H1 (cell line): ENCODE measurements at regions of chr6 and their contacts with region 1.

Region 1: DNA sequence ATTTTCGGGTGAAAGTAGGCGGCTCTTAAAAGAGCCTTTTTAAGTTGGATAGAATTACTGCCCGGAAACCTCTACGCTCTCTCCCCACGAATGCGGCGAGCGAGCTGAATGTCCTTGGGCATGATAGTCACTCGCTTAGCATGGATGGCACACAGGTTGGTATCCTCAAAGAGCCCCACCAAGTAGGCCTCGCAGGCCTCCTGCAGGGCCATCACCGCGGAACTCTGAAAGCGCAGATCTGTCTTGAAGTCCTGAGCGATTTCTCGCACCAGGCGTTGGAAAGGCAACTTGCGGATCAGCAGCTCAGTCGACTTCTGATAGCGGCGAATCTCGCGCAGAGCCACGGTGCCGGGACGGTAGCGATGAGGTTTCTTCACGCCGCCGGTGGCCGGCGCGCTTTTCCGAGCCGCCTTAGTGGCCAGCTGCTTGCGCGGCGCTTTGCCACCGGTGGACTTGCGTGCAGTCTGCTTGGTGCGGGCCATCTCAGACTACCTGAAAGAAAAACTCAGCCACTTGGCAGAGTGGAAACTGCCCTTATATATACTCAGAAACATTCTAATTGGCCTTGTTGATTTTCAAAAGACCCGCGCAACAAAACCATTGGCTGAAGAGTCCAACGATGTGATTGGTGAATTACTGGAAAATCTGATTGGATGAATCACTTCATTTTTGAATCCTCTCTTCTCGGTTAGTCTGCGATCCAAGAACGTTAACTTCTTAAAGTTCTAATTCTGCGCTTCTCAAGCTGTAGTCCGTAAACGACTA is 93.9 kb upstream of the BTN3A2 start:
- DNase-seq: peak in 1 of 2 experiments; percentile 85
- H3K4me3 ChIP-seq: peak overlapping the region; percentile 73 to 97 (median 88)
- H3K27ac ChIP-seq: peak overlapping the region; percentile 93
- H3K4me1 ChIP-seq: peaks cover 0 to 10% (median 4%) of the 10 kb centered on the region in 4 experiments; a peak in 4 of 7 replicates
- H3K27me3 ChIP-seq: no peaks in the 10 kb centered on the region
- CTCF ChIP-seq: no peak
- EP300 ChIP-seq: no peak
- POLR2A ChIP-seq: peak; percentile 94 to 100
- RAD21 ChIP-seq: no peak

Region 2: DNA sequence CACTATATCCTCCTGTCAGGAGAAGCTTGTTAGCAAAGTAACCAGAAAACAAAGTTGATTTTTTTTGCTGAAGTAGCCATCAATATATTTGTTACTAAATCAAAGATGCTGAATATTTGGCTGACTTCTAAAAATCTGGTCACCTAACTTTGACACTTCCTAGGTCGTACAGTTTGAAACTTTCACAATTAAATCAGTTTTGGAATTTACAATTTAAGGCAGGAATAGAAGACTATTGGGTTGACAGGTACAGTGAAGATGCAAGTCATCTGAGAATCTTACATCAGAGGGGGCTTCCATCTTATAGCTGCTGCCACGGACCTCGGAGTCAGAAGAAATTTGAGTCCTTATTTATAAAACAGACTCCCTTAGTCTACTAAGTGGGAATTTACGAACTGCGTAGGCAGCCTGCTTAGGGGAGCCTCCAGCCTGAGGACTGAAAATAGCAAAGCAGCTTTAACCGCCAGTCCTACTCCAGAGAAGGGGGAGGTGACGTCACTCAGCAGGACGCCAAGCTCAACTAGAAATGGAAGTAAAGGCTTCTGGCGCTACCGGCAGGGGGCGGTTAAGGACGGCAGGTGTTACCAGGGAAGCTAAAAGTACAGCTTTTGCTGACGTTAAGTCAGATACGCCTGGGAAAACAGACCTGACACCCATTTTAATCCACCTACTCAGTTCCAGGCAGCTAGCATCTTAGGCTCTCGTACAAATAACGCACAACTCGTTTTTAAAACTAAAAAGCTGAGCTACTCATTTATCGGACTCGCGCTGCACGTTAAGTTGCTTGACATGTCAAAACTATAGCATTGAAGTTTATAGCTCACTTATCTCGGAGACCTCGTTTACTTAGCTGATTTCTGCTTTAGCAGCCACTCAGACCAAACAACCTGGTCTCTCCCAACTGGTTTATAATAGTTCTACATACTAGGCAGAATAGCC is 244.9 kb before region 1 on chr6:
- CTCF ChIA-PET with region 1: no interaction called
- POLR2A ChIA-PET with region 1: interaction called, 107 read pairs
- DNase-seq: peak; percentile 90 to 93
- H3K4me3 ChIP-seq: peak overlapping the region; percentile 75 to 89 (median 82)
- H3K27ac ChIP-seq: peak overlapping the region; percentile 80
- H3K4me1 ChIP-seq: peaks cover 3 to 26% (median 10%) of the 10 kb centered on the region in 4 experiments; a peak in 5 of 7 replicates
- H3K27me3 ChIP-seq: no peaks in the 10 kb centered on the region
- CTCF ChIP-seq: peak; percentile 63 to 93 (median 77)
- EP300 ChIP-seq: peak in 1 of 2 experiments; percentile 43; a peak in 1 of 3 replicates
- POLR2A ChIP-seq: peak; percentile 85 to 91; a peak in 2 of 3 replicates
- RAD21 ChIP-seq: peak; percentile 45 to 47

Region 3: GRCh38 chr6:26103770-26104456 is 167.2 kb before region 1 on chr6:
- CTCF ChIA-PET with region 1: no interaction called
- POLR2A ChIA-PET with region 1: interaction called, 12 read pairs
- DNase-seq: peak; percentile 80 to 83
- H3K4me3 ChIP-seq: peak overlapping the region; percentile 41 to 63 (median 52)
- H3K27ac ChIP-seq: peak overlapping the region; percentile 92
- H3K4me1 ChIP-seq: peaks cover 0 to 3% (median 0%) of the 10 kb centered on the region in 4 experiments; a peak in 2 of 7 replicates
- H3K27me3 ChIP-seq: no peaks in the 10 kb centered on the region
- CTCF ChIP-seq: peak in 2 of 3 experiments; percentile 26 to 37; a peak in 3 of 4 replicates
- EP300 ChIP-seq: peak in 1 of 2 experiments; percentile 96; a peak in 1 of 3 replicates
- POLR2A ChIP-seq: peak; percentile 98 to 99
- RAD21 ChIP-seq: no peak; a peak in 1 of 4 replicates

Region 4: DNA sequence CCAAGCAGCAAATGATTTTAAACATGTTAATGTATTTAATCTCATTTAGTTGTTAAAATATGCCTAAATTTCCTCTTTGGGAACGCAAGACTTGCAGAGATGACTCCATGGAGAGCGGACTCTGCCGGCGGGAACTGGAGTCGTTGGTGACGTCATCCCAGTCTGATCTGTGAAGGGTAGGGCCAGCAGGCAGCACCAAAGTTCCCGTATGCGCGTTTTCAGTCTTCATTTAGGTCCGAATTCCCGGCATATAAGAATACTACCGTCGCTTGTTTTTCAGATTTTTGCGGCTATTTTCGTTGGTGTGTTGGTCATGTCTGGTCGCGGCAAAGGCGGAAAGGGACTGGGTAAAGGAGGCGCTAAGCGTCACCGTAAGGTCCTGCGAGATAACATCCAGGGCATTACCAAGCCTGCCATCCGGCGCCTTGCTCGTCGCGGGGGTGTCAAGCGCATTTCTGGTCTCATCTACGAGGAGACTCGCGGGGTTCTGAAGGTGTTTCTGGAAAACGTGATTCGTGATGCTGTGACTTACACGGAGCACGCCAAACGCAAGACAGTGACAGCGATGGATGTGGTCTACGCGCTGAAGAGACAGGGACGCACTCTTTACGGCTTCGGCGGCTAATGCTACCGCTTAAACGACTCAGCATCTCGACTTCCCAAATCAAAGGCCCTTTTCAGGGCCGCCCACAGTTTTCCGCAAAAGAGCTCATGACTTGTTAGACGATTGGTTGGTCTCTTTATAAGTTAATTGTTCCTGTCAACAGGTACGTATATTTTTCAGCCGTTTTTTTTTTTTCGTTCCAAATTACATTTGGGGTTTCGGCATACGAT is 66.5 kb before region 1 on chr6:
- CTCF ChIA-PET with region 1: interaction called, 4 read pairs
- POLR2A ChIA-PET with region 1: interaction called, 744 read pairs
- DNase-seq: peak; percentile 88 to 97
- H3K4me3 ChIP-seq: peak overlapping the region; percentile 64 to 94 (median 82)
- H3K27ac ChIP-seq: peak overlapping the region; percentile 98
- H3K4me1 ChIP-seq: peaks cover 0 to 15% (median 5%) of the 10 kb centered on the region in 4 experiments; a peak in 6 of 7 replicates
- H3K27me3 ChIP-seq: no peaks in the 10 kb centered on the region
- CTCF ChIP-seq: peak in 1 of 3 experiments; percentile 18; a peak in 1 of 4 replicates
- EP300 ChIP-seq: peak; percentile 13 to 95; a peak in 2 of 3 replicates
- POLR2A ChIP-seq: peak; percentile 99 to 100
- RAD21 ChIP-seq: 0 out of 4 replicates have a peak, but pooled peaks of 1 of the 2 experiments have one; percentile 14

Region 5: GRCh38 chr6:26258200-26258977 is 12.7 kb before region 1 on chr6:
- CTCF ChIA-PET with region 1: interaction called, 93 read pairs
- POLR2A ChIA-PET with region 1: no interaction called
- DNase-seq: no peak
- H3K4me3 ChIP-seq: no peak overlapping the region
- H3K27ac ChIP-seq: no peak overlapping the region
- H3K4me1 ChIP-seq: peaks cover 0 to 4% (median 0%) of the 10 kb centered on the region in 4 experiments; a peak in 1 of 7 replicates
- H3K27me3 ChIP-seq: no peaks in the 10 kb centered on the region
- CTCF ChIP-seq: peak in 2 of 3 experiments; percentile 9 to 36; a peak in 2 of 4 replicates
- EP300 ChIP-seq: no peak
- POLR2A ChIP-seq: no peak
- RAD21 ChIP-seq: peak in 1 of 2 experiments; percentile 31; a peak in 1 of 4 replicates

Region 6: DNA sequence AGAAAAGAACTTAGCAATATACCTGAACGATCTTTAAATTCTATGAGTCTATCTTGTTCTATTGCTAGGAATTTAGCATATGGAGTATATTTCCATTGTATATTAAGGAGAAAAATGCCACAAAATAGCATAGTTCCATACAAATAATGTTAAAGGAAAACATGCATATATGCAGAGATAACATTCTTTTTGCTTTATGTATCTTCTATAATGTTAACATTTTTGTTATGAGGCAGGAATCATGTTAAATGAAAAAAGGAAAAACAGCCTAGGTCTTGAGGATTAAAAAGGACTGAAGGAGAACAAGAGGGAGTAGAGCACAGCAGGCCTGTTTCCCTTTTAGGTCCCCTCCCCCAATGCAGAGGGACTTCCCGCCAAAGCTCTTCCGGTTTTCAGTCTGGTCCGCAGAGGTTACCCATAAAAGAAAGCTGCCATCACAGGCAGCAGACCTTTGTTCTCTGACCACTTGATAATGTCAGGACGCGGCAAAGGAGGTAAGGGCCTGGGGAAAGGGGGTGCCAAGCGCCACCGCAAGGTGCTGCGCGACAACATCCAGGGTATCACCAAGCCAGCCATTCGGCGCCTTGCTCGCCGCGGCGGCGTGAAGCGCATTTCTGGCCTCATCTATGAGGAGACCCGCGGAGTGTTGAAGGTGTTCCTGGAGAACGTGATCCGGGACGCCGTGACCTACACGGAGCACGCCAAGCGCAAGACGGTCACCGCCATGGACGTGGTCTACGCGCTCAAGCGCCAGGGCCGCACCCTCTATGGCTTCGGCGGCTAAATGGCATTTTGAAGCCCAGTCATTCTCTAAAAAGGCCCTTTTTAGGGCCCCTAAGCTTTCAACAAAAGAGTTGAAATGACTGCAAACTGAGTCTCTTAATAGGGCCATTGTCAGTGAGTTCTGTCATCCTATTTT is 868.0 kb after region 1 on chr6:
- CTCF ChIA-PET with region 1: no interaction called
- POLR2A ChIA-PET with region 1: interaction called, 86 read pairs
- DNase-seq: peak; percentile 91 to 92
- H3K4me3 ChIP-seq: peak overlapping the region; percentile 50 to 95 (median 70)
- H3K27ac ChIP-seq: peak overlapping the region; percentile 95
- H3K4me1 ChIP-seq: peaks cover 0 to 10% (median 4%) of the 10 kb centered on the region in 4 experiments; a peak in 5 of 7 replicates
- H3K27me3 ChIP-seq: no peaks in the 10 kb centered on the region
- CTCF ChIP-seq: no peak
- EP300 ChIP-seq: peak; percentile 40 to 99
- POLR2A ChIP-seq: peak; percentile 91 to 99
- RAD21 ChIP-seq: no peak